GM12878 (cell line): ENCODE measurements at regions of chr10 and their contacts with region 1.

Region 1: GRCh38 chr10:72297968-72298773 is 24.4 kb downstream of the DDIT4 start:
- DNase-seq: peak; percentile 91
- ATAC-seq: peak; percentile 84
- H3K4me3 ChIP-seq: peak overlapping the region; percentile 80
- H3K27ac ChIP-seq: peak overlapping the region; percentile 100
- H3K4me1 ChIP-seq: peaks cover 40% of the 10 kb centered on the region
- H3K27me3 ChIP-seq: no peaks in the 10 kb centered on the region
- CTCF ChIP-seq: no peak
- EP300 ChIP-seq: peak in 1 of 2 experiments; percentile 24; a peak in 1 of 4 replicates
- POLR2A ChIP-seq: peak; percentile 83
- RAD21 ChIP-seq: no peak

Region 2: GRCh38 chr10:71963756-71964668 is 334.2 kb before region 1 on chr10 and contains the start of gene CHST3:
- CTCF ChIA-PET with region 1: no interaction called
- POLR2A ChIA-PET with region 1: no interaction called
- RAD21 ChIA-PET with region 1: no interaction called
- SMC1A ChIA-PET with region 1: no interaction called
- in situ Hi-C with region 1: no loop called
- intact Hi-C with region 1: no loop called
- DNase-seq: no peak
- ATAC-seq: peak; percentile 75
- H3K4me3 ChIP-seq: peak within 1 kb of the TSS; percentile 16
- H3K27ac ChIP-seq: no peak within 1 kb of the TSS
- H3K4me1 ChIP-seq: no peaks in the 10 kb centered on the region
- H3K27me3 ChIP-seq: peaks cover 0 to 3% of the 10 kb centered on the region in 2 experiments; a peak in 2 of 4 replicates
- CTCF ChIP-seq: no peak
- EP300 ChIP-seq: no peak
- POLR2A ChIP-seq: no peak
- RAD21 ChIP-seq: no peak
- polyA plus RNA-seq, gene CHST3: 0.04 TPM in 1 of 2 experiments, not detected in the other

Region 3: DNA sequence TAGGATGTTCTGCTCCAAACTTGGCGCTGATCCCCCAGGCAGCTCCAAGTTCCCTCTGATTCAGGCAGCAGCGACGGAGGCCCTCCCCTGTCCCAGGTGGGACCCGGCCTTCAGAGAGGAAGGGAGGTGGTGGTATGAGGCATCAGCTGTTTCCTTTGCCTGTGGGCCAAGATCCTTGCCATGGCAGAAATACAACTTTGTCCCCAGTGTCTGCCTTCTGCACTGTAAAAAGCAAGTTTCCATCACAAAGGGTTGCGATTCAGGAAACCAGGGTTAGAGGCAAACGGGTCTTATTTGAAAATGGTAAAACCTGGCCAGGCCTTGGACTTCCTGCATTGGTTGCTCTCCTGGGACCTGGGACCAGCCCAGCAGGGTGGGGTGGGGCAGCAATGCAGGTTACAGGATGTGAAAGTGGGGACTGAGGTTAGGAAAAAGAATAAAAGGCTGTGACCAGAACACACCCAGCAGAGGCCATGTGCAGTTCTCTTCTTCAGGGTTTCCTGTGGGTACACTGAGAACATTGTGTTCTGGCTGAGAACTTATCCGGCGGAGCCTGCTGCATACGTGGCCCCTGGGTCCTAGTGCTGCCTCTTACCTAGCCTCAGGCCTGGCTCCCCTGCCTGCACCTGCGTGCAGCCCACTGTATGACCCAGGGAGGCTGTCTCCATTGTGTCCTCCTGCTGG is 49.6 kb before region 1 on chr10:
- CTCF ChIA-PET with region 1: interaction called, 3 read pairs
- POLR2A ChIA-PET with region 1: interaction called, 84 read pairs
- RAD21 ChIA-PET with region 1: interaction called, 21 read pairs
- SMC1A ChIA-PET with region 1: interaction called, 20 read pairs
- in situ Hi-C with region 1: no loop called
- intact Hi-C with region 1: loop called (anchors 1 kb)
- DNase-seq: peak; percentile 99
- ATAC-seq: peak; percentile 95
- H3K4me3 ChIP-seq: peak overlapping the region; percentile 55; the same call in 1 of the 2 replicates
- H3K27ac ChIP-seq: peak overlapping the region; percentile 97
- H3K4me1 ChIP-seq: peaks cover 72% of the 10 kb centered on the region
- H3K27me3 ChIP-seq: no peaks in the 10 kb centered on the region
- CTCF ChIP-seq: no peak
- EP300 ChIP-seq: peak; percentile 88 to 91
- POLR2A ChIP-seq: peak; percentile 89
- RAD21 ChIP-seq: no peak

Region 4: DNA sequence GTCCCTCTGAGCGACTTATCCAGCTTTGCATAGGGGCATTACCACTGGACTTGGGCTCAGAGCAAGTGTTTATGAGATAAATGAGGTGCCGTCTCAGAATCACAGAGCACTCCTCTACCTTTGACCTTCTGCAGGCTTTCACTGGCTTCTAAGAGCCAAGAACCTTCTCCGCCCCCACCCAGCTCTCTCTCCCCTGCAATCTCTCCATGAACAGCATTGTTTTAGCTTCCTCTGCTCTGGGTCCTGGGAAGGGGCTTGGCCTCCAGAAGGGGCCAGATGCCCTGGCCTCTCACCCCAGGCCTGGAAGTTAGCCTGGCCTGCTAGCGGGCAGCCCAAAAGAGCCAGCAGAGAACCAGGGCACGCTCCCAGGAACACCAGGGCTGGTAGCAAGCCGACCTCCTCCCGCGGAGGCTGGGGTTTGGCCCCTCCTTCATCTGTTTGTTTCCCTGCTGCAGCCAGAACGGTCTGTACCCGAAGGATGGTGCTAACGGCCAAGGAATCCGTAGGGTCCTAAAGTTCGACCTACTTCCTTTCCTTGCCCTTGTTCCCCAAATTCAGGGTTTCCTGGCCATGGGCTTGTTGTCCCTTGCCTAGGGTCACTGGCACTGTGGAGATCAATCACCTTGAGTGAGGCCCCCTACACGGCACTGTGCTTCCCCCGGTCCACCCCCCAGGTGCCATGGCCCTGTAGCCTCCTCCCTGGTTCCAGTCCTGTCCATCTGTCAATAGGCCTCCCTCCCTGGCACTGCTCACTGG is 43.2 kb before region 1 on chr10:
- CTCF ChIA-PET with region 1: interaction called, 5 read pairs
- POLR2A ChIA-PET with region 1: interaction called, 84 read pairs
- RAD21 ChIA-PET with region 1: interaction called, 61 read pairs
- SMC1A ChIA-PET with region 1: interaction called, 15 read pairs
- in situ Hi-C with region 1: no loop called
- intact Hi-C with region 1: no loop called
- DNase-seq: no peak
- ATAC-seq: peak; percentile 73
- H3K4me3 ChIP-seq: peak overlapping the region; percentile 10; the same call in 1 of the 2 replicates
- H3K27ac ChIP-seq: peak overlapping the region; percentile 90
- H3K4me1 ChIP-seq: peaks cover 72% of the 10 kb centered on the region
- H3K27me3 ChIP-seq: no peaks in the 10 kb centered on the region
- CTCF ChIP-seq: peak in 1 of 3 experiments; percentile 33; a peak in 2 of 6 replicates
- EP300 ChIP-seq: no peak
- POLR2A ChIP-seq: peak; percentile 69
- RAD21 ChIP-seq: peak; percentile 40